Breast epithelium (tissue), 4 donors: ENCODE measurements at regions of chr16 and their contacts with region 1.

Region 1: DNA sequence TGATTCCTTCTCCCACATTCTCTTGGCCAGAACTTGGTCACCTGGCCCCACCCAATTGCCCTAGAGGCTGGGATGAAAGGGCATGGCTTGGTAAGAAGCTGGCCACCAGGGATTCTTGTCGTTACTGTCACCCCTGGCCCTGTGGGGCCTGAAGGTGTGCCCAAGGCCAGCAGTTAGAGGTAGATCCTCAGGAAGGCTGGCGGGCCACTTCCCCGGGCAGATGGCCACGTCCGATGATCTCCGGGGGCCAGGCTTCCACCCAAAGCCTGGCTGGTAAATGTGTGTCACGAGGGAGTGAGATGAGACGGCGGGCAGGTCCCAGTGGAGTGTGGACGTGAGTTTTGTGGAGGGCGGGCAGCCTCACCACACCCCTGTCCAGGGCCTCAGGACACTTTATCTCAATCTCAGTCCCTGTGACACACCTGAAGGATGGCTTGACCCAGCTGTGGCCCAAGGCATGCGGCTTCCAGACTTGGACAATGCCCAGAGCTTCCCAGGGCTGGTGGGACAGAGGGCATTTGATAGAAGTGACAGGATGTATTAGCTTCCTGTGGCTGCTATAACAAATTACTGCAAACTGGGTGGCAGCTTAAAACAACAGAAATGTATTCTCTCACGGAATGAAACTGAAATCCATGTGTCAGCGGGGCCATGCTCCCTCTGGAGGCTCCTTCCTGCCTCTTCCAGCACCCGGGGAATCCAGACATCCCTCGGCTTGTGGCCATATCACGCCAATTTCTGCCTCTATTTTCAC is 66.2 kb upstream of the GSE1 start:
- DNase-seq: no peak
- H3K4me3 ChIP-seq: no peak overlapping the region
- H3K27ac ChIP-seq: peak overlapping the region in 1 of 2 donors; percentile 52
- H3K4me1 ChIP-seq: no peaks in the 10 kb centered on the region
- H3K27me3 ChIP-seq: no peaks in the 10 kb centered on the region
- CTCF ChIP-seq: no peak
- POLR2A ChIP-seq: no peak

Region 2: DNA sequence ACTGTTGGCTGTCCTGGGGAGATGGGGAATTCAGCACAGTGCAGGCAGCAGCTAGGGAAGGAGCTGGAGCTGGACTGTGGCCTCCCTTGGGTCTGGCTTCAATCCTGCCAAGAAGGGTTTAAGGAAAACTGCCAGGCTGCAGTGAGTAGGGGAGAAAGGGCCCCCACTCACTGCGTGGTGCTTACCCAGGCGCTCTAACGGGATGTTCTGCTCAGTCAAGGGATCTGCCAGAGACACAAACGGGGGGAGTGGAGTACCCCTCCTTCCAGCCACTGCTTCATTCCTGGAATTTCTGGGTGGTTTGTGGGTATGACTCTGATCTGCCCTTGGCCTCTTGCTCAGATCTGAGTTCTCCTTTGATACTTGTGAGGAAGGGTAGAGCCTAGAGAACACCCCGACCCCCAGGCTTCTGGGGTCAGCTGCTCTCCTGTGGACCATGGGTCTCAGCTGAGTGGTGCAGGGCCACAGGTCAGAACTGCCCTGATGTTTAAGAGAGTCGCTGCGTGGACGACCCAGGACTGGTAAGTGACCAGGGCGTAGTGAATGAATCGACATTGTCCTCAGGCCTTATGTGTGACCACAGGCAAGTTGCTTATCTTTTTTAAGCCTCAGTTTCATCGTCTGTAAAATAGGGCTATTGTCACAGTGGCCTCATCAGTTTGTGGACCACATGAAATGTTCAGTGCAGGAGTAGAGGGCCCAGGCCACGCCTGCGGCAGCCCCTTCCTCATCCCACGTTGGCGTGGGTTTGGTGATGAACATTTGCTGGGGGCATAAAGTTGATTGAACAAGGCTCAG is 717.5 kb before region 1 on chr16:
- intact Hi-C with region 1: no loop called
- DNase-seq: no peak
- H3K4me3 ChIP-seq: peak overlapping the region in 1 of 3 donors; percentile 27
- H3K27ac ChIP-seq: peak overlapping the region; percentile 1 to 66
- H3K4me1 ChIP-seq: peaks cover 0 to 16% of the 10 kb centered on the region in 2 donors
- H3K27me3 ChIP-seq: no peaks in the 10 kb centered on the region
- CTCF ChIP-seq: no peak
- POLR2A ChIP-seq: no peak

Region 3: GRCh38 chr16:85503679-85504231 is 43.1 kb before region 1 on chr16:
- intact Hi-C with region 1: no loop called
- DNase-seq: no peak
- H3K4me3 ChIP-seq: no peak overlapping the region
- H3K27ac ChIP-seq: no peak overlapping the region
- H3K4me1 ChIP-seq: no peaks in the 10 kb centered on the region
- H3K27me3 ChIP-seq: no peaks in the 10 kb centered on the region
- CTCF ChIP-seq: no peak
- POLR2A ChIP-seq: no peak

Region 4: GRCh38 chr16:85575920-85576319 is 29.0 kb after region 1 on chr16:
- intact Hi-C with region 1: loop called (anchors 1 kb)
- DNase-seq: no peak
- H3K4me3 ChIP-seq: no peak overlapping the region
- H3K27ac ChIP-seq: no peak overlapping the region
- H3K4me1 ChIP-seq: peaks cover 8 to 30% of the 10 kb centered on the region in 2 donors
- H3K27me3 ChIP-seq: no peaks in the 10 kb centered on the region
- CTCF ChIP-seq: no peak
- POLR2A ChIP-seq: no peak

Region 5: GRCh38 chr16:85604145-85604705 is 57.4 kb after region 1 on chr16:
- intact Hi-C with region 1: no loop called
- DNase-seq: no peak
- H3K4me3 ChIP-seq: no peak overlapping the region
- H3K27ac ChIP-seq: no peak overlapping the region
- H3K4me1 ChIP-seq: no peaks in the 10 kb centered on the region
- H3K27me3 ChIP-seq: no peaks in the 10 kb centered on the region
- CTCF ChIP-seq: no peak
- POLR2A ChIP-seq: no peak

Region 6: DNA sequence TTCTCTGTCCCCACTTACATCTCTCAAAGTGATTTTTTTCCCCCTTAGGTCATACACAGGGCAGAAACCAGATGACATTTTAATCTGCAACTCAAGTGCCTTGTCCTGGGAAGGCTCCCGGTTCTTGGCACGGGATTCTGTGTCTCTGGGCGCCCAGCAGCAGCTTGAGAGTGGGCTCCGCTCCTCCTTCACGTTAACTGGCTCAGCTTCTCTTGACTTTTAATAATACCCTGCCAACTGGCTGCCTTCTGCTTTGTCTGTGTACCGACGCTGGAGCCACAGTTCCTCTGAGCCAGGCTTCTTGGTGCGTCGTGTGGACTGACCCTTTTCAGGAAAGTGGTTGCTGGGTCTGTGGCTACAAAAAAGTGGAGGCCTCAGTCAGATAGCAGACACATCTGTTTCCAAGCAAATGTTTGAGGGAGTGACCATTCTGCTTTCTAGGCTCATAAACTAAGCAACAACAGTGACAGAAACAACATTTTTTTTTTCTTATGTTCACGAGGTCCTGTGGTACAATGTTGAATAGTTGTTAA is 416.9 kb after region 1 on chr16:
- intact Hi-C with region 1: no loop called
- DNase-seq: peak in 1 of 2 donors; percentile 19
- H3K4me3 ChIP-seq: no peak overlapping the region
- H3K27ac ChIP-seq: no peak overlapping the region
- H3K4me1 ChIP-seq: no peaks in the 10 kb centered on the region
- H3K27me3 ChIP-seq: no peaks in the 10 kb centered on the region
- CTCF ChIP-seq: no peak
- POLR2A ChIP-seq: no peak